ENCODE measurements at regions of chr12 and their contacts with region 1.

Region 1: DNA sequence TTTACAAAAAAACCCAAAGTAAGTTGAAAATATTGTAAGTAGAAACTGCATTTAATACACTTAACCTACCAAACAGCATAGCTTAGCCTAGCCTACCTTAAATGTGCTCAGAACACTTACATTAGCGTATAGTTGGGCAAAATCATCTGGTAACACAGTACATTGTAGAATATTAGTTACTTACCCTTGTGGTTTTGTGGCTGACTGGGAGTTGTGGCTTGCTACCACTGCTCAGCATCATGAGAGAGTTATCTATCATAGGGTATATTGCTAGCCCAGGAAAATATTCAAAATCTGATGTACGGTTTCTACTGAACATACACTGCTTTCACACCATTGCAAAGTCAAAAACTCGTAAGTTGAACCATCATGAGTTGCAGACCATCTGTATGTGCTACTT is 141.7 kb upstream of the GARIN6 start:
- DNase-seq: no peak
- H3K4me3 ChIP-seq: no peak overlapping the region
- H3K27ac ChIP-seq: no peak overlapping the region
- H3K4me1 ChIP-seq: no peaks in the 10 kb centered on the region
- H3K27me3 ChIP-seq: no peaks in the 10 kb centered on the region
- CTCF ChIP-seq: no peak

Region 2: DNA sequence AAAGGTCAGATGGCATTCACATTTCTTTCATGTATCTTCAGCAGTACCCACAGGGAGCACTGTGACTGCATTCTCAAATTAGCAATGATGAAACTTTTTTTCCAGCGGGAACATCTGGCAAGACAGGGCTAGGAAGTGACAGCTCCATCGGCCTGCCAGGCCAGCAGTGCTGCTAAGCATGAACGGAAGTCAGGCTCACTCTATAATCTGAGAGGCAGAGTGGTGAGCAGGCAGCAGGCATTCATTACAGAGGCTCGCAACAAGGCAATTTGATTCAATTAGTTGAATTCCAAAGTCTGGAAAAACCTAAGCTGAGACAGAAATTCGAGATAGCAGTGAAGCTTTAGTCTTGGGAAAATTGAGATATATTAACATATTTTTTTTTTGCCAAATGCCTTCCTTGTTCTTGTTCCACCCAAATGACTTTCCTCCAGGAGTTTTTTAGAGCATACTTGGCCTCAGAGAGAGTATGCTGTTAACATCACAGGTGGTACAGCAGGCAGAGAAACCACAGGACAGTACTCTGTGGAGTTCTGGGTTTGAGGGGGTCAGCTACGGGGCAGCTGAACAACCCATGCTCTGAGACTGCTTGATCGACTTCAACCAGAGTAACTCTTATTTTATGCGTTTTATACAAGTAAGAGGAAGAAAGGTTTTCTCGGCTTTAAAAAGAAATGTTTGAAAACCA is 445.8 kb before region 1 on chr12:
- CTCF ChIA-PET with region 1: no interaction called
- POLR2A ChIA-PET with region 1: no interaction called
- intact Hi-C with region 1: no loop called
- DNase-seq: no peak
- H3K4me3 ChIP-seq: no peak overlapping the region
- H3K27ac ChIP-seq: no peak overlapping the region
- H3K4me1 ChIP-seq: no peaks in the 10 kb centered on the region
- H3K27me3 ChIP-seq: peaks cover 19% of the 10 kb centered on the region; the same call in 1 of the 2 replicates
- CTCF ChIP-seq: no peak

Region 3: GRCh38 chr12:99287136-99287535 is 218.7 kb before region 1 on chr12:
- CTCF ChIA-PET with region 1: no interaction called
- POLR2A ChIA-PET with region 1: no interaction called
- intact Hi-C with region 1: loop called (anchors 10 kb)
- DNase-seq: no peak
- H3K4me3 ChIP-seq: no peak overlapping the region
- H3K27ac ChIP-seq: no peak overlapping the region
- H3K4me1 ChIP-seq: no peaks in the 10 kb centered on the region
- H3K27me3 ChIP-seq: no peaks in the 10 kb centered on the region
- CTCF ChIP-seq: no peak